GM23248 (cell line): ENCODE measurements at regions of chr5 and their contacts with region 1.

Region 1: DNA sequence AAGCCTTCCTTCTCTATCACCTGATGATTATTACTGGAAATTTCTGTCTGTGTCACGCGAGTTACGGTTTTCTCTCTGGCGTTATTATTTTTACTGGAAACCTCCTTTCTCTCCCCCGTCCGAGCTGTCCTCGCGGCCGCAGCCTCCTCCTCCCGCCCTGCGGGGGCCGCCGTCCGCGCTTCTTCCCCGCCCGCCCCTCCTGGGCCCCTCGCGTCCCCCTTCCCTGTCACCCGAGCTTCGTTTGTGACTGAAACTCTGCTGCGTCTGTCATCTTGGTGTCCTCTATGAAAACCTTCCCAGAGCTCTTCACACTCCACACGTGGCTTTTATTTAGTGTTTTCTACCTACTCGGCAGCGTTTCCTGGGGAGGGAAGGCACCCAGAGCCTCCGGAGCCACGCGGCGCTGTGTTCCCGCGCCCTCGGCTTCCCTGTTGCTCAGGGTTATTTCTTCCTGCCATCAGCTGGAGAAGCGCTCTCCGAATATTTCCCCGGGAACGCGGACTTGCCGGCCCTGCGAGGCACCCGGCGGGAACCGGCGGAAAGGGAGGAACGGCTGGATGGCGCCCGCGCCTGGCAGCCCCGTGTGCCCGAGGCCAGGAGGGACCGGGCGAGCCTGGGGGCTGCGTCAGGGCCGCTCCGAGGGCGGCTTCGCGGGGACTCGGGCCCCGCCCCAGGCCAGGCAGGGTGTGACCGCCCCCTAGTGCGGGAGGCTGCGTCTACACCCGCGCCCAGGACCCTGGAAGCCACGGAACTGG is 33.9 kb downstream of the TRIP13 start:
- DNase-seq: peak; percentile 56
- H3K4me3 ChIP-seq: peak overlapping the region; percentile 63
- H3K27ac ChIP-seq: no peak overlapping the region
- H3K4me1 ChIP-seq: peaks cover 4% of the 10 kb centered on the region; the same call in 1 of the 2 replicates
- H3K27me3 ChIP-seq: peaks cover 1% of the 10 kb centered on the region

Region 2: GRCh38 chr5:1641560-1642166 is 715.1 kb after region 1 on chr5:
- in situ Hi-C with region 1: loop called (anchors 25 kb)
- DNase-seq: peak; percentile 96
- H3K4me3 ChIP-seq: peak overlapping the region; percentile 30
- H3K27ac ChIP-seq: no peak overlapping the region
- H3K4me1 ChIP-seq: peaks cover 3% of the 10 kb centered on the region; the same call in 1 of the 2 replicates
- H3K27me3 ChIP-seq: peaks cover 11% of the 10 kb centered on the region